ENCODE measurements at regions of chr17 and their contacts with region 1.

Region 1: GRCh38 chr17:65191811-65192740 is 54.9 kb downstream of the RGS9 start:
- DNase-seq: no peak
- ATAC-seq: no peak

Region 2: GRCh38 chr17:65158041-65158440 is 34.0 kb before region 1 on chr17:
- intact Hi-C with region 1: loop called in 1 of 2 experiments (anchors 2 kb)
- DNase-seq: no peak
- ATAC-seq: no peak

Region 3: DNA sequence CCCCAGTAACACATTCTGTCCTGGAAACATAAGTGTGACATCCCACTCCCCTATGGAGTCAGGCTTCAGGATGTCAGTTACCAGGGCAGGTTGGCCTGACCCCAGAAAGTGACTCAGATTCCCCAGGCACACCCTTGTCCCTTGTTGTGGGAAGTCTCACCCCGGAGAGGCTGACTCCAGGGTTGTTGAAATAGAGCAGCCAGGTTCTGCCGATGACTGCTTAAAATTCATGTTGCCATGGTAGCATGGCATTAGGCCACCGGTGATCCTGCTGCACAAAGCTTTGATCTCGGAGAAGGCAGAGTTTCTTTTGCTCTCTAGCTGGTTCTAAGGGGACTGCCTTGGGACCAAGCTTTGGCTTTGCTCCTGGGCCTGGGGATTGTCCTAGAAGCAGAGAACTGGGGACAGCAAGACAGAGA is 51.7 kb after region 1 on chr17:
- intact Hi-C with region 1: no loop called
- DNase-seq: peak; percentile 44
- ATAC-seq: peak in 1 of 2 donors; percentile 76

Region 4: DNA sequence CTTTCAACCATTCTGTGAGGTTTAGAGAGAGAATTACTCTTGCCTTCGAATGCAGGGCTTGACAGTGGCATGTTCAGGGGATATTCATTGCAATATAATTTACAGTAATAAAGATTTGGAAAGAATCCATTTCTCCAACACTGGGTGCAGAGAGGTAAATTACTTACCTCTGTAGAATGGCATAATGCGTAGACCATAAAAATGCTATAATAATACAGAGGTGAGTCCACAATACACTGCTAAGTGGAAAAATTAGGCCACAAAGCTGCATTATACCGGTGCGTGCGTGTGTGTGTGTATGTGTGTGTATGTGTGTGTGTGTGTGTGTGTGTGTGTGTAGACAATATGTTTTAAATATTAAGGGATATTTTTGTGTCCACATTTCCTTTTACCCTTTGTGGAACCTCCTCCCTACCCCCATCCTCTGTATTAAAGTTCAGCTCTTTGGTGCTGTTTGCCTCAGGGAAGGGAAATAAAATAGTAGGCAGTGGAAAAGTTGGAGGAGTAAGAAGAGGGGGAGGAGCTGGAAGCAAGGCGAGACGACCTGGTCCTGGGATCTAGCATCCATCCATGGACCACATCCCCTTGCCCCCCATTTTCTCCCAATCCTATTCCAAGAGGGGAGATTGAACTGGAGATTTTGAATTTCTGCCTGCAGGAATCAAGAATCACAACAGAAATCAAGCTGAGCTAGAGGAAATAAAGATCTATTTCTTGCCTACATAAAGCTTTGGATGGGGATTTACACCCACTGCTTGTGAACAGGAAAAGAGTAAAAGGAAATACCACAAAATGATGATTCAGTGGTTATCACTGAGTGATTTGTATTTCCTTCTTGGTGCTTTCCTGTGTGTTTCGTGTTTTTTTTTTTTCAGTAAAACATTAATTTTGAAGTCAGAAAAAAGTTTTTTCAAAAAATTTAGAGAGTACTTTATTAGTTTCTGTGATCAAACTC is 69.9 kb after region 1 on chr17:
- intact Hi-C with region 1: no loop called
- DNase-seq: no peak
- ATAC-seq: no peak

Region 5: DNA sequence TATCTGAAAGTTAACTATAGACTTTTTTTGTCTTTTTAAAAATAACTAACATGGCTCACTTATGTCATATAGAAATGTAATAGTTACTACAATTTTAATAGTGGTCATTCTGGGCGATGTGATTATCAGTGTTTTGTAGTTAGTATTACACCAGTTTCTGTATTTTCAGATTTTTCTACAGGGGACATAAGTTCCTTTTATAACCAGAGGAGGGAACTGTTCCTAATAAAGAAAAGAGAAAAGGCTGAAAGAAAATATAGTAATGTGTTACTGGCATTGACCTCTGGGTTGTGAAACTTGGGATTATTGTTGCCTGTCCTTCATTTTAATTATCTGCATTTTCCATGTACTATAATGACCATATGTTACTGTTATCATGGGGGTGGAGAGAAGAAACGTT is 230.6 kb after region 1 on chr17:
- intact Hi-C with region 1: no loop called
- DNase-seq: no peak
- ATAC-seq: no peak

Measured in left cardiac atrium (tissue), 4 donors.